ENCODE measurements at regions of chrX and their contacts with region 1.

Region 1: DNA sequence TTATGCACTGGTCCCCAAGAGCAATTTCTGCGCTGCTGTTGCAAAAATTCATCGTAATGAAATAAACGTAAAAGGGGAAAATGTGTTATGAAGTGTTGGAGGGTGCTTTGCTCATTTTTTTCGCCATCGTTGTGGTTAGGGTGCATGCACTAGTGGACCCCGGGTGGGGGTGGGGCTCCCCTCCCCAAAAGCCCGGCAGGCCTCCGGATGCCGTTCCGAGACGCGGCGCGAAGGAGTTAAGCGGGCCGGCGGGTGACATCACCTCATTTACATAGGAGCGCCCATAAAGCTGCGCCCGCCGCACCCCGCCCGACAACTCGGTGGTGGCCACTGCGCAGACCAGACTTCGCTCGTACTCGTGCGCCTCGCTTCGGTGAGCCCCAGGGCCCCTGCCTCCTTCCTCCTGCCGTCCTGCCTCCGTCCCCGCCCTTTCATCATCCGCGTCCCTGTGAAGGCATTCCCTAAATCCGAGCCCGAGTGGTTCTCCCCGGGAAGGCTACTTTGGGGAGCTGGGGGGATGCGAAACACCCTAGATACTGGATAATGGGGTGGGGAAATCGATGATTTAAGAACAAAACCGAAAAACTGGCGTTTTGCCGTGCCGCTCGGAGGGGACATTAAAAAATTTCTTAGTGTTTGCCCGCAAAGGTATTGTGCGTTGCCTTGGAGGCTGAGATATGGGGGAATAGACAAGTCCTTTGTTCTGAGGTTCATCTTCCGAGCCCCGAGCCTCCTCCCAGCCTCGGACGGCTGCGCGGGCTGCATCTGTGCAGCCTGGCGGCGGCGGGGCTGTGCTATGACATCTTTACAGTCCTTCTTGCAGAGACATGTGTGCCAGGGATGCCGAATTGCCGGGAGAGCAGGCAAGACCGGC is at the start of gene TMSB4X:
- DNase-seq: peak; percentile 83
- H3K4me3 Mint-ChIP-seq: peak within 1 kb of the TSS; percentile 97
- H3K27ac Mint-ChIP-seq: peak within 1 kb of the TSS; percentile 98
- H3K4me1 Mint-ChIP-seq: peaks cover 50% of the 10 kb centered on the region
- H3K27me3 Mint-ChIP-seq: no peaks in the 10 kb centered on the region
- total RNA-seq, gene TMSB4X: 6,544 and 6,612 TPM in 2 replicates

Region 2: DNA sequence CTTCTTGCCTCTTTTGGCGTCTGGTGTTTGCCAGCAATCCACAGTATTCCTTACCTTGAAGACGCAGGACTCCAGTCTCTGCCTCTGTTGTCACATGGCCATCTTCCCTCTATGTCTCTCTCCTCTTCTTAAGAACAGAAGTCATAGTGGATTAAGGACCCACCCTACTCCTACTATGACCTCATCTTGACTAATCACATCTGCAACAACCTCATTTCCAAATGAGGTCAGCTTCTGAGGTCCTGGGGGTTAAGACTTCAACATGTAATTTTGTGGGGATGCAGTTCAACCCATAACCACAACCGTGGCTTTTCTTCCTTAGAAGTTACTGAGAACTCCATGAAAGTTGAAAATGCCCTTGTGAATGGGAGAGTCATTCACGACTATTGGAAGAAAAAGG is 45.3 kb before region 1 on chrX:
- intact Hi-C with region 1: no loop called
- DNase-seq: no peak
- H3K4me3 Mint-ChIP-seq: no peak overlapping the region
- H3K27ac Mint-ChIP-seq: no peak overlapping the region
- H3K4me1 Mint-ChIP-seq: no peaks in the 10 kb centered on the region
- H3K27me3 Mint-ChIP-seq: peaks cover 2% of the 10 kb centered on the region

Region 3: GRCh38 chrX:13005661-13006473 is 30.8 kb after region 1 on chrX:
- intact Hi-C with region 1: loop called (anchors 5 kb)
- DNase-seq: no peak
- H3K4me3 Mint-ChIP-seq: peak overlapping the region; percentile 86
- H3K27ac Mint-ChIP-seq: peak overlapping the region; percentile 100
- H3K4me1 Mint-ChIP-seq: peaks cover 62% of the 10 kb centered on the region
- H3K27me3 Mint-ChIP-seq: no peaks in the 10 kb centered on the region